ENCODE measurements at regions of chr18 and their contacts with region 1.

Region 1: GRCh38 chr18:13216092-13216582 is 2.4 kb upstream of the LDLRAD4 start:
- DNase-seq: peak; percentile 78
- ATAC-seq: peak; percentile 73

Region 2: GRCh38 chr18:13530879-13531387 is 314.8 kb after region 1 on chr18:
- intact Hi-C with region 1: loop called (anchors 1 kb)
- DNase-seq: peak; percentile 77
- ATAC-seq: peak; percentile 88

Region 3: DNA sequence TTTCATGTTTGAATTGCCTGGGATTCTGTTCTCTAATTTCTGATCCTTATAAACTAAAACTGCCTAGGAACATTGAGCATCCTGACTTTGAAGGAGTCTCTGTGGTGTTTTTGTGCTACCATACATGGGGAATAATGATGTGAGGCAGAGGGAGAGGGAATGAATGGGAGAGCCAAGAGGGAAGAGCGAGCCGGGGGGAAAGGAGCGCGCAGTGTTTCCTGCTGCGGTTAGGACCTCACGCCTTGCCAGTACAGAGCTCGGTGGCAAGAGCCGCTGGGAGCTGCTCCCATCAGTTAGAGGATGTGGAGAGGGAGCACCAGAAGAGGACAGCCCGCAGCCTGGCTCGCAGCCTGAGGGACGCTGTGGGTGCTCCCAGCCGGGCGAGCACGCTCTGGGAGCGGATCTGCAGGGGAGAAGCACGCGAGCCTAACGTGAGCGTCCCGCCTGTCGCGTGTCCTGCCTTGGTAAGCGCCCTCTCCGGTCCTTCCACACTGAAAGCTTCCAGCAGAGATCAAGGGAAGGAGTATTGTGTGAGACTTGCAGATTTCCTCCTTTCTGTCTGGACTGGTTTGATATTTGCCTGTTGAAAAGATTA is 395.6 kb after region 1 on chr18:
- intact Hi-C with region 1: loop called (anchors 5 kb)
- DNase-seq: peak; percentile 78
- ATAC-seq: peak; percentile 88

Region 4: GRCh38 chr18:13629841-13630715 is 413.9 kb after region 1 on chr18:
- intact Hi-C with region 1: loop called (anchors 2 kb)
- DNase-seq: peak; percentile 50
- ATAC-seq: peak; percentile 84

Region 5: GRCh38 chr18:13726232-13726971 is 510.3 kb after region 1 on chr18 and contains the starts of genes FAM210A and RNMT:
- intact Hi-C with region 1: loop called (anchors 2 kb)
- DNase-seq: peak; percentile 99
- ATAC-seq: peak; percentile 98
- total RNA-seq, gene FAM210A: 58.1 TPM
- total RNA-seq, gene RNMT: 22.2 TPM

Measured in Right ventricle myocardium inferior (tissue), 1 donor.